Dorsolateral prefrontal cortex (tissue), 120 donors: ENCODE measurements at regions of chr1 and their contacts with region 1.

Region 1: GRCh38 chr1:207963427-207964194 is 52.7 kb upstream of the CD34 start:
- DNase-seq: peak; percentile 61 to 89 (median 82)
- H3K4me3 ChIP-seq: peak overlapping the region; percentile 41 to 83 (median 70)
- H3K27ac ChIP-seq: peak overlapping the region; percentile 87 to 100 (median 98)
- H3K27me3 ChIP-seq: no peaks in the 10 kb centered on the region
- CTCF ChIP-seq: peak; percentile 97 to 100 (median 100)

Region 2: GRCh38 chr1:207828485-207829158 is 135.0 kb before region 1 on chr1:
- intact Hi-C with region 1: loop called (anchors 1 to 2 kb)
- DNase-seq: peak in 8 of 10 donors; percentile 48 to 87 (median 76)
- H3K4me3 ChIP-seq: peak overlapping the region in 7 of 59 donors; percentile 3 to 28 (median 18)
- H3K27ac ChIP-seq: peak overlapping the region; percentile 3 to 100 (median 99)
- H3K27me3 ChIP-seq: no peaks in the 10 kb centered on the region
- CTCF ChIP-seq: peak; percentile 69 to 97 (median 86)

Region 3: DNA sequence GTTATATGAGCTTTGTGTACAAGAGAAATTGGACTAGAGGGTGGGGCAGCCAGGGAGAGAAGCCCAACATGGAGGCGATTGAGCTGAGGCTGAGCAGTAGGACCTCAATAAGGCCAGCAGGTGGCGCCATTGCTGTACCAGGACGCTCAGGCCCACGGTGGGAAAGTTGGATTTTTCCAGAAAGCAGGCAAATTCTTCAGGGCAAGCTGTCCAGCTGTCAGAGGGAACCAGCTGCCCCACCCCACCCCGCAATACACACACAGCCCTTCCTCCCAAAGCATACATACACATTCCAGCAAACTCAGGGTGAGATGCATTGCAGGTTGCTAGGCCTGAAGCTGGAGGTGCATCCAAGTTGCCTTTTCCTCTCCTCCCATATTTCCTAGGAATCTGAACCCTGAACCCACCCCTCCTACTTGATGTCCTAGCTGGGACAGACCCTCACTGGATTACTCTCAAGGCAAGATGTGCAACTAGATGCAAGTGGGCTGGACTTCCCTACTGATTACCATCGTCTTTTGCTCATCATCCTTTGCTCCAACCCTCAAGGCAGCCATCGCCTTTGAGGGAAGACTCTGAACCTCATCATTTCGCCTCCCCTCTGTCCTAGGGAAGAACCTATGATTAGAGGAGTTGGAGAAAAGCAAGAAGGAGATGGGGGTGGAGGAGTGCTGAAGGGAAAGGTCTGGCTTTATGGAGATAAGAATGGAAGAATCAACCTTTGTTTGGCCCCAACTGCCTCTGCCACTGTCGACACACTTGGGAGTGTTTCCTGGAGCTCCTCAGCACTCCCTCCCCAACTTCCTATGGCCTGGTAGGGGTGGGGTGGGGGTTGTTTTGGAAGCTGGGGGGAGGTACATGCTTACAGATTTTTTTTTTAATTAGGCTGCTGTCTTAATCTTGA is 78.2 kb before region 1 on chr1:
- intact Hi-C with region 1: loop called (anchors 1 to 2 kb)
- DNase-seq: peak; percentile 78 to 90 (median 82)
- H3K4me3 ChIP-seq: no peak overlapping the region
- H3K27ac ChIP-seq: peak overlapping the region in 49 of 59 donors; percentile 4 to 79 (median 59)
- H3K27me3 ChIP-seq: no peaks in the 10 kb centered on the region
- CTCF ChIP-seq: peak; percentile 81 to 99 (median 96)

Region 4: DNA sequence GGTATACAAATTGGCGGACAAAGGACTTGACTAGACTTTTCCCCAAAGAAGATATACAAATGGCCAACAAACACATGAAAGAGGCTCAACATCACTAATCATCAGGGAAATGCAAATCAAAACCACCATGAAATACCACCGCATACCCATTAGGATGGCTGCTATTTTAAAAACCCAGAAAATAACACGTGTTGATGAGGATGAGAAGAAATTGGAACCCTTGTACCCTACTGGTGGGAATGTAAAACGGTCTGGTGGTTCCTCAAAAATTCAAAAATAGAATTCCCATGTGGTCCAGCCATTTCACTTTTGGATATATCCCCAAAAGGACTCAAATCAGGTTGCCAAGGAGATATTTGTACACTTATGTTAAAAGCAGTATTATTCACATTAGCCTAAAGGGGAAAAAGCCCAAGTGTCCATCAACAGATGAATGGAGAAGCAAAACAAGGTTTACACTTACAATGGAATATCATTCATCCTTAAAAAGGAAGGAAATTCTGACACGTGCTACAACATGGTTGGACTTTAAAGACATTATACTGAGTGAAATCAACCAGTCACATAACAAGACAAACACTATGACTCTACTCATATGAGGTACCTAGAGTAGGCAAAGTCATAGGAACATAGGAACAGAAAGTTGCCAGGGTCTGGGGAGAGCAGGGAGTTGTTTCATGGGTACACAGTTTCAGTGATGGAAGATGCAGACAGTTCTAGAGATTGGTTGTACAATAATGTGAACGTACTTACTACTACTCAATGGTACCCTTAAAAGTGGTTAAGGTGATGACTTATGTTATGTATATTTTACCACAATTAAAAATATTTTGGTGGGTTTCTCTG is 69.7 kb before region 1 on chr1:
- intact Hi-C with region 1: loop called in 1 of 2 experiments (anchors 2 kb)
- DNase-seq: no peak
- H3K4me3 ChIP-seq: no peak overlapping the region
- H3K27ac ChIP-seq: peak overlapping the region in 1 of 59 donors; percentile 33
- H3K27me3 ChIP-seq: no peaks in the 10 kb centered on the region
- CTCF ChIP-seq: peak in 1 of 56 donors; percentile 15